Panc1 (cell line): ENCODE measurements at regions of chr12 and their contacts with region 1.

Region 1: GRCh38 chr12:117671734-117672133 is 297.1 kb downstream of the KSR2 start:
- DNase-seq: no peak
- ATAC-seq: no peak; the same call in 1 of the 2 replicates
- H3K4me3 ChIP-seq: no peak overlapping the region
- H3K27ac ChIP-seq: no peak overlapping the region
- H3K4me1 ChIP-seq: no peaks in the 10 kb centered on the region
- H3K27me3 ChIP-seq: peaks cover 2% of the 10 kb centered on the region; the same call in 1 of the 2 replicates
- CTCF ChIP-seq: peak; percentile 84

Region 2: GRCh38 chr12:117236456-117237001 is 435.2 kb before region 1 on chr12:
- CTCF ChIA-PET with region 1: no interaction called
- POLR2A ChIA-PET with region 1: no interaction called
- in situ Hi-C with region 1: no loop called
- intact Hi-C with region 1: loop called (anchors 10 kb)
- DNase-seq: peak; percentile 48
- ATAC-seq: peak; percentile 93
- H3K4me3 ChIP-seq: no peak overlapping the region
- H3K27ac ChIP-seq: no peak overlapping the region
- H3K4me1 ChIP-seq: no peaks in the 10 kb centered on the region
- H3K27me3 ChIP-seq: peaks cover 5% of the 10 kb centered on the region; the same call in 1 of the 2 replicates
- CTCF ChIP-seq: peak; percentile 91